Heart left ventricle (tissue), 16 donors: ENCODE measurements at regions of chr15 and their contacts with region 1.

Region 1: DNA sequence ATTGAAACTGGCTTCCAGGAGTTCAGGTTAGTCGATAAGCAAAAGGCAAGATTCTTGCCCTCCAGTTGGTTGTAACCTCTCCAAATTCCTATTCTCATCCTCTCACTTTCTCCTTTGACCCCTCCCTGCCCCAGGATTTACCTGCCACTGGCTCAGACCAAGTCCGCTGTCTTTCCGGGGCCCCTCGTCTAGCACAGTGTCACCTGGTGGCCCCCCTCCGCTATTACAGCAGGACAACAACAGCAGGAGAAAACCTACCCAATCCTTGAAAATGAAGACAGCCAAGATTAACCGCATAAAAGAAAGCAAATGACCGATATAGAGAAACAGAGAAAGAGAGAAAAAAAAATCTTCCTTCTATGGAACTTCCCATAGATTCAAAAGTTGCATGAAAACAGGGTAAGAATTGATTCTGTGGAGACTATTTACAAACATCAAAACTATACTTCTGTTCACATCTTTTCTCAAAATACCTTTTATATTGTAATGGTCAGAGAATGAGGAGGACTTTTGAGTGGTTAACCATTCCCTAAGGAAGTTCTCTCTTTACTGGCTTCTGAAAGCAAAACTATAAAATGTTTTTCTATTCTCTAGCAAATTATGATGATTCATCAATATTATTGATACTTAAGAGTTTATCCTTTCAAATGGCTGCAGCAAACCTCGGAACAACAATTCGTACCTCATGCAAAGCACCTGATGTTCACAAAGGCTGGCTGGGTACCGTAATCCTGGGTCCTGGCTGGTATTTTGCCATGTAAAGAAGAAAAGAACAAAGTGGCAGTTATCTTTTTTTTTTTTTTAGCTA is 10.0 kb upstream of the ST8SIA2 start:
- DNase-seq: peak in 1 of 5 donors; percentile 40
- ATAC-seq: peak in 1 of 4 donors; percentile 41
- H3K4me3 ChIP-seq: no peak overlapping the region
- H3K27ac ChIP-seq: no peak overlapping the region
- H3K4me1 ChIP-seq: no peaks in the 10 kb centered on the region
- H3K27me3 ChIP-seq: peaks cover 0 to 16% (median 2%) of the 10 kb centered on the region in 9 donors
- CTCF ChIP-seq: peak; percentile 34 to 68 (median 56)
- POLR2A ChIP-seq: no peak

Region 2: GRCh38 chr15:92277776-92278175 is 105.9 kb before region 1 on chr15:
- intact Hi-C with region 1: loop called in 8 of 10 experiments (anchors 1 to 5 kb)
- DNase-seq: peak in 1 of 5 donors; percentile 19
- ATAC-seq: peak in 3 of 4 donors; percentile 57 to 77 (median 58)
- H3K4me3 ChIP-seq: no peak overlapping the region
- H3K27ac ChIP-seq: no peak overlapping the region
- H3K4me1 ChIP-seq: no peaks in the 10 kb centered on the region
- H3K27me3 ChIP-seq: no peaks in the 10 kb centered on the region
- CTCF ChIP-seq: peak; percentile 13 to 51 (median 36)
- POLR2A ChIP-seq: no peak

Region 3: GRCh38 chr15:92283813-92284212 is 99.9 kb before region 1 on chr15:
- intact Hi-C with region 1: loop called in 5 of 10 experiments (anchors 5 kb)
- DNase-seq: no peak
- ATAC-seq: peak in 3 of 4 donors; percentile 74 to 88 (median 78)
- H3K4me3 ChIP-seq: no peak overlapping the region
- H3K27ac ChIP-seq: peak overlapping the region in 4 of 12 donors; percentile 19 to 55 (median 44)
- H3K4me1 ChIP-seq: peaks cover 0 to 5% (median 0%) of the 10 kb centered on the region in 12 donors
- H3K27me3 ChIP-seq: no peaks in the 10 kb centered on the region
- CTCF ChIP-seq: no peak
- POLR2A ChIP-seq: no peak